Activated CD8-positive, alpha-beta T cell treated with anti-CD3 and anti-CD28 coated beads for 36 hours (primary cell): ENCODE measurements at regions of chr9 and their contacts with region 1.

Region 1: GRCh38 chr9:133992780-133993634 is 883 bp upstream of the VAV2 start:
- DNase-seq: peak; percentile 80
- ATAC-seq: peak; percentile 83
- H3K4me3 Mint-ChIP-seq: peak overlapping the region; percentile 60
- H3K27ac Mint-ChIP-seq: no peak overlapping the region
- H3K4me1 Mint-ChIP-seq: peaks cover 2% of the 10 kb centered on the region
- H3K27me3 Mint-ChIP-seq: peaks cover 3% of the 10 kb centered on the region
- CTCF ChIP-seq: peak; percentile 30

Region 2: GRCh38 chr9:133742849-133743444 is 250.1 kb before region 1 on chr9:
- CTCF ChIA-PET with region 1: interaction called, 14 read pairs
- POLR2A ChIA-PET with region 1: no interaction called
- intact Hi-C with region 1: no loop called
- DNase-seq: peak; percentile 82
- ATAC-seq: peak; percentile 75
- H3K4me3 Mint-ChIP-seq: no peak overlapping the region
- H3K27ac Mint-ChIP-seq: no peak overlapping the region
- H3K4me1 Mint-ChIP-seq: peaks cover 9% of the 10 kb centered on the region
- H3K27me3 Mint-ChIP-seq: no peaks in the 10 kb centered on the region
- CTCF ChIP-seq: peak; percentile 99

Region 3: GRCh38 chr9:133792721-133793470 is 200.1 kb before region 1 on chr9:
- CTCF ChIA-PET with region 1: interaction called, 54 read pairs
- POLR2A ChIA-PET with region 1: interaction called, 5 read pairs
- intact Hi-C with region 1: loop called (anchors 2 kb)
- DNase-seq: peak; percentile 66
- ATAC-seq: peak; percentile 94
- H3K4me3 Mint-ChIP-seq: no peak overlapping the region
- H3K27ac Mint-ChIP-seq: no peak overlapping the region
- H3K4me1 Mint-ChIP-seq: peaks cover 6% of the 10 kb centered on the region
- H3K27me3 Mint-ChIP-seq: peaks cover 4% of the 10 kb centered on the region
- CTCF ChIP-seq: peak; percentile 93

Region 4: DNA sequence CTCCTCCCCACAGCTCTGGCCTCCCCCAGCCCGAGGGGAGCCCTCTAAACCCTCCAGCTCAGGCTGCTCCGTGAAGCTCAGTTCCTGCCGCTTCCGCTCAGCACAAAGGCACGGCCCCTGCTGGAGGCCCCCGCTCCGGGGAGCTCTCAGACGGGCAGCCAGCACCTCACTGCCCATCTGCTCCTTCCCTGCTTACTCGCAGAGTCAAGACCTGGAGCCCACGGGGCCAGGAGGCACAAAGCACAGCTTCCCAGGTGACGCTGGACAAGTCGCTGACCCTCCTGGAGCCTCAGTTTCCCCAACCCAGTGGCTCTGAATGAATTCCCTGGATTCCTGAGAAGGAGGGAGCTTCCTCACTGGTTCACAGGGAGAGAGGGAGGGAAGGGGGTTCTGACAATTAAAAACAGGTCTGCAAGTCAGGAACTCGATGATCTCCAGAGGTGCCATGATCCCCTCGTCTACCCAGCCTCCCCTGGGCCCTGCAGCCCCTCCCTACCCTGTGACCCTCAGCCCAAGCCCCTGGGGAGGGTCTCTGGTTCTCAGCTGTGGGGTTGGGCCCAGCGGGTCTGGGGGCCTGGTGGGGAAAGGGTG is 37.1 kb before region 1 on chr9:
- CTCF ChIA-PET with region 1: interaction called, 15 read pairs
- POLR2A ChIA-PET with region 1: no interaction called
- intact Hi-C with region 1: no loop called
- DNase-seq: peak; percentile 52
- ATAC-seq: peak; percentile 89
- H3K4me3 Mint-ChIP-seq: peak overlapping the region; percentile 31
- H3K27ac Mint-ChIP-seq: peak overlapping the region; percentile 80
- H3K4me1 Mint-ChIP-seq: peaks cover 25% of the 10 kb centered on the region
- H3K27me3 Mint-ChIP-seq: no peaks in the 10 kb centered on the region
- CTCF ChIP-seq: no peak

Region 5: GRCh38 chr9:134049236-134049635 is 56.2 kb after region 1 on chr9:
- CTCF ChIA-PET with region 1: no interaction called
- POLR2A ChIA-PET with region 1: no interaction called
- intact Hi-C with region 1: no loop called
- DNase-seq: no peak
- ATAC-seq: no peak
- H3K4me3 Mint-ChIP-seq: no peak overlapping the region
- H3K27ac Mint-ChIP-seq: no peak overlapping the region
- H3K4me1 Mint-ChIP-seq: no peaks in the 10 kb centered on the region
- H3K27me3 Mint-ChIP-seq: no peaks in the 10 kb centered on the region
- CTCF ChIP-seq: no peak

Region 6: DNA sequence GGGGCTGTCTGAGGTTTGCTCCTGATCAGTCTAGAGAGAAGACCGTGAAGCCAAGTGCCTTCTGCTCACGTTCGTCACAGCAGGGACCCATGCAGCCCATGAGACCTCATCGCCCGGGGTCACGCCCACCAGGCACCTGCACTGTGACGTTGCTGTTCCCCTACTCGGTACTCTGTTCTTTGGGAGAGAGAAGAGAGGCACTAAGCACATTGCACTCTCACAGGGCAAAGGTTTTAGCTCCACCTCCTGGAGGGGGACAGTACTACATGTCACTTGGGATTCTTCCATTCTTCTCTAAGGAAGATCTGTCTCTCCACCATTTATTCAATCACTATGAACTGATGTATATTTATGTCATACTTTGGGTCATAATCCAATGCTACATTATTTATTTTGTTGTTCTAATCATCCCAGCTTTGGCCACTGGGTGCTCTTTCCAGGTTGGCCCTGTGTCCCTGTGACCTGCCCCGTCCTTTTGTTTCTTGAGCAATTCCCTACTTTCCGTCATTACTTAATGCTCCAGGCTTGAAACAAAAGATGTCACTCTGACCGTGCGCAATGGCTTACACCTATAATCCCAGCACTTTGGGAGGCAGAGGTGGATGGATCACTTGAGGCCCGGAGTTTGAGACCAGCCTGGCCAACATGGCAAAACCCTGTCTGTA is 106.2 kb after region 1 on chr9:
- CTCF ChIA-PET with region 1: interaction called, 20 read pairs
- POLR2A ChIA-PET with region 1: no interaction called
- intact Hi-C with region 1: no loop called
- DNase-seq: peak; percentile 78
- ATAC-seq: peak; percentile 100
- H3K4me3 Mint-ChIP-seq: no peak overlapping the region
- H3K27ac Mint-ChIP-seq: no peak overlapping the region
- H3K4me1 Mint-ChIP-seq: no peaks in the 10 kb centered on the region
- H3K27me3 Mint-ChIP-seq: peaks cover 6% of the 10 kb centered on the region
- CTCF ChIP-seq: peak; percentile 89